Aorta (tissue), 5 donors: ENCODE measurements at regions of chr20 and their contacts with region 1.

Region 1: GRCh38 chr20:58986968-58987517 is 6.0 kb downstream of the NELFCD start:
- DNase-seq: no peak
- ATAC-seq: no peak
- H3K4me3 ChIP-seq: no peak overlapping the region
- H3K27ac ChIP-seq: no peak overlapping the region
- H3K4me1 ChIP-seq: peaks cover 0 to 4% of the 10 kb centered on the region in 2 donors
- H3K27me3 ChIP-seq: no peaks in the 10 kb centered on the region

Region 2: GRCh38 chr20:58900399-58900798 is 86.6 kb before region 1 on chr20:
- intact Hi-C with region 1: loop called (anchors 5 kb)
- DNase-seq: no peak
- ATAC-seq: no peak
- H3K4me3 ChIP-seq: no peak overlapping the region
- H3K27ac ChIP-seq: no peak overlapping the region
- H3K4me1 ChIP-seq: peaks cover 0 to 7% of the 10 kb centered on the region in 2 donors
- H3K27me3 ChIP-seq: no peaks in the 10 kb centered on the region